ENCODE measurements at regions of chr6 and their contacts with region 1.

Region 1: GRCh38 chr6:32118782-32119628 is 9.0 kb downstream of the ATF6B start:
- DNase-seq: peak; percentile 85 to 89 (median 87)
- ATAC-seq: peak; percentile 91 to 96 (median 92)
- H3K4me3 ChIP-seq: peak overlapping the region in 2 of 3 donors; percentile 9 to 28
- H3K27ac ChIP-seq: peak overlapping the region in 2 of 3 donors; percentile 2 to 54
- H3K4me1 ChIP-seq: peaks cover 0 to 11% (median 5%) of the 10 kb centered on the region in 4 donors
- H3K27me3 ChIP-seq: no peaks in the 10 kb centered on the region
- CTCF ChIP-seq: peak; percentile 86 to 97 (median 94)
- POLR2A ChIP-seq: no peak

Region 2: GRCh38 chr6:32153564-32154513 is 34.8 kb after region 1 on chr6 and contains the start of gene PPT2:
- intact Hi-C with region 1: loop called (anchors 5 kb)
- DNase-seq: peak; percentile 79 to 87 (median 85)
- ATAC-seq: peak; percentile 81 to 83 (median 82)
- H3K4me3 ChIP-seq: peak within 1 kb of the TSS; percentile 74 to 78 (median 78)
- H3K27ac ChIP-seq: peak within 1 kb of the TSS; percentile 63 to 75 (median 74)
- H3K4me1 ChIP-seq: peaks cover 0 to 7% (median 0%) of the 10 kb centered on the region in 4 donors
- H3K27me3 ChIP-seq: peaks cover 0 to 6% of the 10 kb centered on the region in 2 donors
- CTCF ChIP-seq: peak in 1 of 4 donors; percentile 12
- POLR2A ChIP-seq: no peak
- total RNA-seq, gene PPT2: 6.4 to 16.0 (median 8.9) TPM

Measured in right lobe of liver (tissue), 6 donors.